HEK293T (cell line): ENCODE measurements at regions of chr7 and their contacts with region 1.

Region 1: GRCh38 chr7:25093268-25093826 is 31.7 kb downstream of the CYCS start:
- DNase-seq: peak; percentile 69

Region 2: DNA sequence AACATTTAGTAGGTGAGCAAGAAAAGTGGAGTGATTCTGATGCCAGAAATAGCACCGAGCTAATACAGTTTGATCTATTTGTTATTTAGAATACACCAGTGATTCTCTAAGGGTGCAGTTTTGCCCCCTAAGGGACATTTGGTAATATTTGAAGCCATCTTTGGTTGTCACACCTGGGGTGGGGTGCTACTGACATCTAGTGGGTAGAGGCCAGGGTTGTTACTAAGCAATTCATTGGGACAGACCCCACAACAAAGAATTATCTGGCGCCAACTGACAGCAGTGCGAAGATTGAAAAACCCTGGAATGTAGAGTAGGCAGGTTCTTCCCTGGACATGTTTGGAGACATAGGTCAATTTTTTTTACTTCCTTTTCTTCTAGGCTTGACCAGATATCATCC is 505.5 kb before region 1 on chr7:
- CTCF ChIA-PET with region 1: interaction called, 12 read pairs
- POLR2A ChIA-PET with region 1: no interaction called
- DNase-seq: no peak

Region 3: GRCh38 chr7:24812310-24812945 is 280.9 kb before region 1 on chr7:
- CTCF ChIA-PET with region 1: interaction called, 49 read pairs
- POLR2A ChIA-PET with region 1: no interaction called
- DNase-seq: peak; percentile 64

Region 4: GRCh38 chr7:24819916-24820689 is 273.2 kb before region 1 on chr7:
- CTCF ChIA-PET with region 1: interaction called, 27 read pairs
- POLR2A ChIA-PET with region 1: interaction called, 3 read pairs
- DNase-seq: peak; percentile 78

Region 5: GRCh38 chr7:25125137-25125946 is 32.0 kb after region 1 on chr7 and contains the start of gene CYCS:
- CTCF ChIA-PET with region 1: interaction called, 3 read pairs
- POLR2A ChIA-PET with region 1: interaction called, 16 read pairs
- DNase-seq: peak; percentile 94